A673 (cell line): ENCODE measurements at regions of chr10 and their contacts with region 1.

Region 1: DNA sequence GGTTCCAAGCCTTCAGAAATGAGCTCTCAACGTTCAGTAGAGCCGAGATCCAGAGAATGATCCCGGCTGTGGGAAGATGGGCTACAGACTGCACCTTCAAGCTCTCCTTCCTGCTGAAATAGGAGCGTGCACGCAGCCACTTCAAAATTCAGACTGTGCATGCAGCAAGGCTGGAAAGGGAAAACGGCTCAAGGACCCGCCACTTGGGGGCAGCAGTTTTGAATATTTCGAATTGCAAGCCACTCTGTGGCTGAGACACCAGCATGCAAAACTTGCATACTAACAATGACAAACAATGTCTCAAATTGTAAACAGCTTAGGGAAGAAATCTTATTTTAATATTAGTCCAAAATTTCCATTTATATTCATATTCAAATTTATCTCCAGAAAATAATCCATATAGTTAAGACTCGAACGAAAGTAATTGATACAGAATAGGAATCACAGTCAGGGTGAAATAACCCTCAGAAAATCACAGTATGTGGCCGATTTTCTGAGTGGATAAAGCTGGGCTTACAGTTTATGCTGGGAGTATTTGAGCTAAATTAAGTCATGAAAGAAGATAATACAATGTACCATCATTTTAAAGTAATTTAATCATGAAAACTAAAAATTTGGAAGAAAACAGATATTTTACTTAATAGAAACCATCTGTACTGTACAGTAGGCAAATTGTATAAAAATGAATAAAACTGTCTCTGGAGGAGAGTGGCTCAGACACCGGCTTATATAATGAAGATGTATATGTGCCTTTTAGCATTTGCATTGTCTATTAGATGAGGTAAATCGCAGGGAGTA is 137.9 kb upstream of the MKI67 start:
- DNase-seq: peak; percentile 79
- H3K4me3 ChIP-seq: no peak overlapping the region
- H3K27ac ChIP-seq: no peak overlapping the region
- H3K4me1 ChIP-seq: no peaks in the 10 kb centered on the region
- H3K27me3 ChIP-seq: peaks cover 9% of the 10 kb centered on the region
- CTCF ChIP-seq: peak; percentile 83

Region 2: GRCh38 chr10:128530301-128530700 is 266.2 kb after region 1 on chr10:
- CTCF ChIA-PET with region 1: interaction called, 4 read pairs
- POLR2A ChIA-PET with region 1: no interaction called
- intact Hi-C with region 1: loop called (anchors 2 kb)
- DNase-seq: peak; percentile 49
- H3K4me3 ChIP-seq: no peak overlapping the region
- H3K27ac ChIP-seq: no peak overlapping the region
- H3K4me1 ChIP-seq: peaks cover 53% of the 10 kb centered on the region
- H3K27me3 ChIP-seq: peaks cover 2% of the 10 kb centered on the region
- CTCF ChIP-seq: peak; percentile 74

Region 3: DNA sequence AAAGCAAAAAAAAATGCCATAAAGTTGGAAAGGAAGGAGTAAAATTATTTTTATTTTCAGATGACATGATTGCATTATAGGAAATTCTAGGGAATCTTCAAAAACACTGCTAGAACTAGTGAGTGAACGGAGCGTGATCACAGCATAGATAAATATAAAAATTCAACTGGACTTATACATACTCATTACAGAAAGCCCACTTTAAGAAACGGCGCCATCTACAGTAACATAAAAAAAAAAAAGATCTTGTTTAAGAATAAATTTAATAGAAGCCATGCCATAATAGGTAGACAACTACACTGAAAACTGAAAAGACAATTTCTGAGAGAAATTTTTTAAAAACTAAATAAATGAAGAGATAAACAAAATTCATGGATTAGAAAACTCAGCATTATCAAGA is 579.9 kb after region 1 on chr10:
- CTCF ChIA-PET with region 1: no interaction called
- POLR2A ChIA-PET with region 1: no interaction called
- intact Hi-C with region 1: loop called (anchors 10 kb)
- DNase-seq: peak; percentile 58
- H3K4me3 ChIP-seq: no peak overlapping the region
- H3K27ac ChIP-seq: no peak overlapping the region
- H3K4me1 ChIP-seq: peaks cover 6% of the 10 kb centered on the region
- H3K27me3 ChIP-seq: no peaks in the 10 kb centered on the region
- CTCF ChIP-seq: peak; percentile 61

Region 4: DNA sequence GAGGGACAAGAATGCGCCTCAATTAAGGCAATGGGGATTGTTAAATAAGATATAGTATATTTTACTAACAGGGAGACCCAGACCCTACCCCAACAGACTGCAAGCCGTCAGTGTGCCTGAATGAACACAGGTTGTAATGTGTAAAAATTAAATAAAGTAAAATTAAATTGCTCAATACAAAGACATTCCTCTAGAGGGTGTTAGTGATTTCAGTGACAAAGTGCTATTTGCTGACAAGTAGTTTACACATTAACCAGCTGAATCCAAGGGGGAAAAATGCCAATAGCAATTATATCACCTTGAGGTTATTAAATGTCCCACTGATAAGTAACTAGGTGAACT is 1589.4 kb after region 1 on chr10:
- CTCF ChIA-PET with region 1: interaction called, 3 read pairs
- POLR2A ChIA-PET with region 1: no interaction called
- intact Hi-C with region 1: loop called (anchors 5 kb)
- DNase-seq: no peak
- H3K4me3 ChIP-seq: peak overlapping the region; percentile 12
- H3K27ac ChIP-seq: peak overlapping the region; percentile 54
- H3K4me1 ChIP-seq: peaks cover 33% of the 10 kb centered on the region
- H3K27me3 ChIP-seq: no peaks in the 10 kb centered on the region
- CTCF ChIP-seq: peak; percentile 63

Region 5: DNA sequence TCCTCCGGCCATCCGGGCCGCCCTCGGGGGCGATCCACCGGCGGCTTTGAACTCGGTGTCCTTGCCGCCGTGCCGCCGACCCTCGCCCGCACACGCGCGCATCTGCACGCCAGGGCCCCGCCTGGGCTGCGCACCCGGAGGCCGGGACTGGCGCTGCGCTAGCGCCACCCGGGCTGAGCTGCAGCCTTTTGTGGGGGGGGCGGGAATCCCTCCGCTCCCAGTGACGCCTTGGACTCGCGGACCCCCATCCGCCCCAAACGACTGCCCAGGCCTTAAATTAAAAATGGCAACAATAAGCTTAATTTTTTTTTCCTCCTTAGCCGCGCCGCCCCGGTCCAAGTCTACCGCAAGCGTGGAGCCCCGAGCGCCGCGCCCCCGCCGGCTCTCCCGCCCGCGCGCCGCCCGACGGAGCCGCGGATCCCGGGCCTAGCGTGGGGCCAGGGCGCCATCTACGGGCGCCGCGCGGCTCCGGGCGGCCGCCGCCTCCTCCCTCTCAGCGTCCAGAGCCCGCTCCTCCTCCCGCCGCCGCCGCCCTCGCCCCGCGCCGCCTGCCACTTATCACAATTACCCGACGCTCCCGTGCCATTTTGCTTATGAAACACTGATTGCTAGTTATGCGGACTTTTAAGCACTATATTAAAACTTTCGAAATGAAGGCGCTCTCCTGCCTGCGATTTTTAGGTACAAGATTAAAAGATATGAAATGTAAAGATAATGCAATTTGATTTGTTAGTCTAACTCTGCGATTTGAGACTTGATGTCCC is 1707.5 kb after region 1 on chr10:
- CTCF ChIA-PET with region 1: no interaction called
- POLR2A ChIA-PET with region 1: no interaction called
- intact Hi-C with region 1: loop called (anchors 5 kb)
- DNase-seq: peak; percentile 90
- H3K4me3 ChIP-seq: peak overlapping the region; percentile 53
- H3K27ac ChIP-seq: no peak overlapping the region
- H3K4me1 ChIP-seq: peaks cover 19% of the 10 kb centered on the region
- H3K27me3 ChIP-seq: peaks cover 18% of the 10 kb centered on the region
- CTCF ChIP-seq: peak; percentile 43; the same call in 1 of the 2 replicates

Region 6: GRCh38 chr10:130179640-130180039 is 1915.5 kb after region 1 on chr10:
- CTCF ChIA-PET with region 1: no interaction called
- POLR2A ChIA-PET with region 1: no interaction called
- intact Hi-C with region 1: loop called (anchors 10 kb)
- DNase-seq: peak; percentile 84
- H3K4me3 ChIP-seq: no peak overlapping the region
- H3K27ac ChIP-seq: no peak overlapping the region
- H3K4me1 ChIP-seq: no peaks in the 10 kb centered on the region
- H3K27me3 ChIP-seq: no peaks in the 10 kb centered on the region
- CTCF ChIP-seq: peak; percentile 67